IMR-90 (cell line): ENCODE measurements at regions of chr5 and their contacts with region 1.

Region 1: GRCh38 chr5:122774861-122775549 is at the start of gene SNX2:
- DNase-seq: peak; percentile 76
- ATAC-seq: peak; percentile 97
- H3K4me3 ChIP-seq: peak within 1 kb of the TSS; percentile 90
- H3K27ac ChIP-seq: peak within 1 kb of the TSS; percentile 80
- H3K4me1 ChIP-seq: no peaks in the 10 kb centered on the region
- H3K27me3 ChIP-seq: no peaks in the 10 kb centered on the region; the same call in 1 of the 2 replicates
- CTCF ChIP-seq: no peak; the same call in 1 of the 2 replicates
- POLR2A ChIP-seq: peak; percentile 64; the same call in 1 of the 2 replicates
- RAD21 ChIP-seq: no peak
- total RNA-seq, gene SNX2: 52.9 and 54.7 TPM in 2 replicates

Region 2: GRCh38 chr5:122845229-122846050 is 70.4 kb after region 1 on chr5 and contains the start of gene SNX24:
- CTCF ChIA-PET with region 1: no interaction called
- POLR2A ChIA-PET with region 1: no interaction called
- dilution Hi-C with region 1: no loop called
- in situ Hi-C with region 1: no loop called
- intact Hi-C with region 1: loop called (anchors 2 kb)
- DNase-seq: peak; percentile 56
- ATAC-seq: peak; percentile 96
- H3K4me3 ChIP-seq: peak within 1 kb of the TSS; percentile 98
- H3K27ac ChIP-seq: peak within 1 kb of the TSS; percentile 87
- H3K4me1 ChIP-seq: peaks cover 5% of the 10 kb centered on the region
- H3K27me3 ChIP-seq: no peaks in the 10 kb centered on the region
- CTCF ChIP-seq: no peak
- POLR2A ChIP-seq: peak; percentile 53; the same call in 1 of the 2 replicates
- RAD21 ChIP-seq: no peak
- total RNA-seq, gene SNX24: 13.8 and 21.7 TPM in 2 replicates